ENCODE measurements at regions of chr20 and their contacts with region 1.

Region 1: GRCh38 chr20:31572701-31573554 is 32.2 kb upstream of the ID1 start:
- DNase-seq: peak; percentile 94 to 97 (median 96)
- ATAC-seq: peak; percentile 74 to 92 (median 88)
- H3K4me3 ChIP-seq: peak overlapping the region; percentile 26 to 66 (median 55)
- H3K27ac ChIP-seq: peak overlapping the region; percentile 81 to 98 (median 89)
- H3K4me1 ChIP-seq: peaks cover 0 to 57% (median 36%) of the 10 kb centered on the region in 12 donors
- H3K27me3 ChIP-seq: no peaks in the 10 kb centered on the region
- CTCF ChIP-seq: no peak
- POLR2A ChIP-seq: peak; percentile 33 to 88

Region 2: GRCh38 chr20:31587545-31588389 is 14.8 kb after region 1 on chr20:
- intact Hi-C with region 1: loop called in 3 of 10 experiments (anchors 1 kb)
- DNase-seq: peak; percentile 82 to 87 (median 84)
- ATAC-seq: peak; percentile 58 to 94 (median 90)
- H3K4me3 ChIP-seq: peak overlapping the region; percentile 16 to 60 (median 50)
- H3K27ac ChIP-seq: peak overlapping the region; percentile 79 to 99 (median 90)
- H3K4me1 ChIP-seq: peaks cover 0 to 36% (median 15%) of the 10 kb centered on the region in 12 donors
- H3K27me3 ChIP-seq: peaks cover 0 to 9% (median 0%) of the 10 kb centered on the region in 9 donors
- CTCF ChIP-seq: no peak
- POLR2A ChIP-seq: no peak

Region 3: DNA sequence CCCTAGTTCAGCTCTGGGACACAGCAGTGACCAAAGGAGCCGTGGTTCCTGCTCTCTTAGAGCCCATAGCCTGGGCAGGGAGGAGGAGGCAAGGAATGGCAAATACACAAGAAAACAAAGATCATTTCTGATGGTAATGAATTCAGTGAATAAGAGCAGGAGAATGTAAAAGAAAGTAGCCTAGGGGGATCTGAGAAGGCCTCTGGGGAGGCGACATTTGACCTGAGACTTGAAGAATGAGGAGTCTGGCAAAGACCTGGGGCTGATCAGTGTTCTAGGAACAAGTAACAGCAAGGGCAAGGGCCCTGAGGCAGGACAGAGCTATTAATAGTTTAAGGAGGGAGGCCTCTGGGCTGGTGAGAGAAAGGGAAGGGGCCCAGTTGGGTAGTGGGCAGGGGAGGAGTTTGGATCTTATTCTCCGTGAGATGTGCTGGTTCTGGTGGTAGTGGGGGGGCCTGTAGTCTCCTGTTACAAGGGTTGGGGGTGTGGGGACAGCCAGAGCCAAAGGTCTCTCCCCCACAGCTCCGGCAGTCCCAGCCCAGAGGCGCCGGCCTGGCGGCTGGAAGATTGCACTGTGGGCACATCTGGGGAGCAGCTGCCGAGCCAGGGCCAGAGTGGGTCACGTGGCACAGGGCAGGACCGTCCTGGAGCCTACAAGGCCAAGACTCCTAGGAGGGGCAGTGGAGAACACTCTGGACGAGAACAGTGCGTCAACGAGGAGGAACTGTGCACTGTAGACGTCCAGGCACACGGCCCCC is 22.9 kb after region 1 on chr20:
- intact Hi-C with region 1: loop called in 1 of 10 experiments (anchors 1 kb)
- DNase-seq: peak; percentile 88 to 92 (median 90)
- ATAC-seq: peak; percentile 90 to 95 (median 92)
- H3K4me3 ChIP-seq: no peak overlapping the region
- H3K27ac ChIP-seq: peak overlapping the region; percentile 73 to 97 (median 90)
- H3K4me1 ChIP-seq: peaks cover 3 to 40% (median 23%) of the 10 kb centered on the region in 12 donors
- H3K27me3 ChIP-seq: no peaks in the 10 kb centered on the region
- CTCF ChIP-seq: no peak
- POLR2A ChIP-seq: peak in 1 of 2 donors; percentile 60

Region 4: GRCh38 chr20:31605031-31605901 is 32.3 kb after region 1 on chr20 and contains the start of gene ID1:
- intact Hi-C with region 1: loop called in 9 of 10 experiments (anchors 1 to 2 kb)
- DNase-seq: peak; percentile 95 to 96 (median 96)
- ATAC-seq: peak; percentile 87 to 91 (median 90)
- H3K4me3 ChIP-seq: peak within 1 kb of the TSS; percentile 58 to 91 (median 74)
- H3K27ac ChIP-seq: peak within 1 kb of the TSS; percentile 83 to 96 (median 92)
- H3K4me1 ChIP-seq: peaks cover 0 to 56% (median 26%) of the 10 kb centered on the region in 12 donors
- H3K27me3 ChIP-seq: peaks cover 0 to 14% (median 0%) of the 10 kb centered on the region in 9 donors
- CTCF ChIP-seq: no peak
- POLR2A ChIP-seq: peak; percentile 16 to 98
- total RNA-seq, gene ID1: 72.4 to 619 (median 112) TPM

Region 5: DNA sequence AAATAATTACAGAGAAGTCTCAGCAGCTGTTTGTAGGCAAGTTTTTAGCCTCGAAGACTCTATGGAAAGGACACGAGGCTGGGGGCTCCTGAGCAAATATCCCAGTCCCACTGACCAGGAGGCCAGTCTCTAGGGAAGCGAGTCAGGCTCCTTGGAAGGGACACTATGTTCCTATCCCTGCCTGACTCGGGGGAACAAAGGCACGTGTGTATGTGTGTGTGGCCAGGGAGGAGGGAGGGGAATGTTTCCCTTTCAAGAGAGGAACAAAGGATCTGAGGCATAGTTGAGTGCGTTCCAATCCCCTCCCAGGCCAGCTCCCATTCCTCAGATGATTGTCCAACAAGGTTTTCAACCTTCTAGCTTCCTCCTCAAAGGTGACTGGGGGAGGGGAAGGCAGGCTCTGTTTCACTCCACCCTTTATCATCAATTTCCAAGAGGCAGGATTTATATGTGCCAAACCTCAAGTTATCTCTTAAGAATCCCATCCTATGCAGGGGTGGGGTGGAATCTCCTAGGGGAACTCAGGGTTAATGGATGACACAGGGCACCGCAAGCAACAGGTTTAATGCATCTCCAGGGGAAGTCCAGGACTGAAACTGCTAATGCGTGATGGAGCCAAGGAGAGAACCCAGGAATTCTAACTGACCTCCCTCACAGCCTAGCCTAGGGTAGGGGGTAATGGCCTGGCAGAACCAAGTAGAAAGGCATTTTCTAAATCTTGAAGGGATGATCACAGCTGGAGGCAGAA is 139.8 kb after region 1 on chr20:
- intact Hi-C with region 1: loop called in 1 of 10 experiments (anchors 10 kb)
- DNase-seq: peak; percentile 80 to 94 (median 88)
- ATAC-seq: peak; percentile 90 to 94 (median 92)
- H3K4me3 ChIP-seq: peak overlapping the region in 10 of 12 donors; percentile 2 to 46 (median 34)
- H3K27ac ChIP-seq: peak overlapping the region; percentile 97 to 100 (median 98)
- H3K4me1 ChIP-seq: peaks cover 36 to 100% (median 92%) of the 10 kb centered on the region in 12 donors
- H3K27me3 ChIP-seq: no peaks in the 10 kb centered on the region
- CTCF ChIP-seq: no peak
- POLR2A ChIP-seq: no peak

Region 6: DNA sequence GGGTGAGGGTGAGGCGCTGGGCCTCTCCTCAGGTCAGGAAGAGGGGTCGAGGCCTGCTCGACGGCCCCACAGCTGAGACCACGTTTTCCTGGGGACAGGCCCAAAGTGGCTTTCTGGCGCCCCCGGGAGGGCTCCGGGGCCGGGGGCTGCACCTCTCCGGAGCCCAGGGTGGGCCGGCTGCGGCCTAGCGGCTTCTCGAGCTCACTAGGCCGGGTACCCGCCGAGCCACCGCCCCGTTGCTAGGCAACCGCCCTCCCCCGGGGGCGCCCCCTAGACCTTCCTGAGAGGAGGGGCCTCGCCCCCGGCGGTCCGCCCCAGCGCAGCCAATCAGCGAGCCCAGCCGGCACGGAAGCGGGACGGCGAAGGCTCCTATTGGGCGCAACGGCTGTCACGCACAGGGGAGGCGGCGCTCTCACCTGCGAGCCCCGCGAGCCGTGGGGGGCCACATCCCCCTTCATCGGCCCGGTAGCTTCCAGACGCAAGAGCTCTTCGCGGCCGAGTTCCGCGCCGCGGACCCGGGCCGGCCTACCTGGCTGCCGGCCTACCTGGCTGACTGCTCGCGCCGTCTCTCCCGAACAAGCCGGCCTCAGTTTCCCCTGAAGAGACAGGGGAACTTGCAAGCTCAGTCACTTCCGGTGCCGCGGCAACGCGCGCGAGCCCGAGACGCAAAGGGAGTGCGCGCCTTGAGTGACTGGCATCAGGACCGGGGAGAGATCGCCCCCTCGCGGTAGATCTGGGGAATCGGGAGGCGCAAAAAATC is 150.6 kb after region 1 on chr20:
- intact Hi-C with region 1: loop called in 5 of 10 experiments (anchors 5 to 10 kb)
- DNase-seq: peak; percentile 98 to 100 (median 99)
- ATAC-seq: peak; percentile 91 to 97 (median 96)
- H3K4me3 ChIP-seq: peak overlapping the region; percentile 52 to 93 (median 82)
- H3K27ac ChIP-seq: peak overlapping the region; percentile 93 to 100 (median 99)
- H3K4me1 ChIP-seq: peaks cover 4 to 44% (median 20%) of the 10 kb centered on the region in 12 donors
- H3K27me3 ChIP-seq: no peaks in the 10 kb centered on the region
- CTCF ChIP-seq: peak; percentile 91 to 97 (median 93)
- POLR2A ChIP-seq: peak; percentile 86 to 87